Sciatic nerve (tissue), 2 donors: ENCODE measurements at regions of chr12 and their contacts with region 1.

Region 1: DNA sequence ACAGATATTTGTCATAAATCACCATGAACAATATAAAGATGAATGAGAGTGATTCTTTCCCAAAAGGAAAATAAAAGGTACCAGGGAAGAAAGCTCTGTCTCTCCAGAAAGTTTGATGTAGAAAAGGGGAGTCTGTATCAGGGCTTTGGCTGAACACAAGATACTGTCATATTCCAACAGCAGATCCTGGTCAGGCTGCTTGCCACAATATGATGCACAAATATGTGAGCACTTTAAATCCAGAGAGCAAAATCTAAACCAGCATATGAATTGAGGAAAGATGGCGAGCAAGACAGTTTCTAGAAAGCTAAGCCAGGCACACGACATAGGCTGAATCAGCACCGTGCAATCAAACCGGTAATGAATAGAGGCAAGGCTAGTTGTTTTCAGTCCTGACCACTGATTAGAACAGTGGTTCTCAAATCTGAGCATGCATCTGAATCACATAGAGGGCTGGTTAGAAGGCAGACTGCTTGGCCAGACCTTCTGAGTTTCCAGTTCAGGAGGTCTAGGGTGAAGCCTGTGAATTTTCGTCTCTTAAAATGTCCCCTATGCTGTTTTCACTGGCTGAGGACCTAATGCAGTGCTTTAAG is 60.7 kb downstream of the PLCZ1 start:
- DNase-seq: no peak
- ATAC-seq: no peak

Region 2: GRCh38 chr12:18391151-18391550 is 285.9 kb before region 1 on chr12:
- intact Hi-C with region 1: no loop called
- DNase-seq: no peak
- ATAC-seq: no peak

Region 3: DNA sequence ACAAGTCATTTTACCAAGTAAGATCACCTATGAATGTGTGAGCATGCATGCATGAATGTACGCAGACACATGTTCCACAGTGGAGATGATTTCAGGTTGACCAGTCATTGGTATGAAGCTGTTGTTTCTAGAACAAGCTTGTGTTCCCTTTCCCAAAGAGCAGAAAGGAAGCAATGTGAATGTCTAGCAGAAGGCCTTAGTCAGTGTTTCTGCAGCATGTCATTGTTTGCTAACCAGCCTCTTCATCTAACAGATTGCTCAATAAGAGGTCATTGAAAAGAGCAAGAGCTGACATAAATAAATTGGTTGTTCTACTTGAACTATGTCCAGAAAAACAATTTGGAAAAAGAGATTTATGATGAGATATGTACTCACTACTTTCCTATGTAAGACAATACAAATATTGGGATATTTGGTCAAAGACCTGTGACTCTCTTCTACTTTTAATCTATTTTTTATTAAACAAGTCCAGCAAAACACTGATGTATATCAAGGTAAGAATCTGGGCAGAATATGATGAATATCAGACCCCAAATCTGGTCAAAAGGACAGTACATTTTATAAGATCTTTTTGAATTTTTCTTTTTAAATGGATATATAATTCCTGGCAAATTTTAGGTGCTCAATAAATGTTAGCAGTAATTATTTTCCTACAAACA is 130.5 kb before region 1 on chr12:
- intact Hi-C with region 1: no loop called
- DNase-seq: no peak
- ATAC-seq: peak; percentile 65

Region 4: DNA sequence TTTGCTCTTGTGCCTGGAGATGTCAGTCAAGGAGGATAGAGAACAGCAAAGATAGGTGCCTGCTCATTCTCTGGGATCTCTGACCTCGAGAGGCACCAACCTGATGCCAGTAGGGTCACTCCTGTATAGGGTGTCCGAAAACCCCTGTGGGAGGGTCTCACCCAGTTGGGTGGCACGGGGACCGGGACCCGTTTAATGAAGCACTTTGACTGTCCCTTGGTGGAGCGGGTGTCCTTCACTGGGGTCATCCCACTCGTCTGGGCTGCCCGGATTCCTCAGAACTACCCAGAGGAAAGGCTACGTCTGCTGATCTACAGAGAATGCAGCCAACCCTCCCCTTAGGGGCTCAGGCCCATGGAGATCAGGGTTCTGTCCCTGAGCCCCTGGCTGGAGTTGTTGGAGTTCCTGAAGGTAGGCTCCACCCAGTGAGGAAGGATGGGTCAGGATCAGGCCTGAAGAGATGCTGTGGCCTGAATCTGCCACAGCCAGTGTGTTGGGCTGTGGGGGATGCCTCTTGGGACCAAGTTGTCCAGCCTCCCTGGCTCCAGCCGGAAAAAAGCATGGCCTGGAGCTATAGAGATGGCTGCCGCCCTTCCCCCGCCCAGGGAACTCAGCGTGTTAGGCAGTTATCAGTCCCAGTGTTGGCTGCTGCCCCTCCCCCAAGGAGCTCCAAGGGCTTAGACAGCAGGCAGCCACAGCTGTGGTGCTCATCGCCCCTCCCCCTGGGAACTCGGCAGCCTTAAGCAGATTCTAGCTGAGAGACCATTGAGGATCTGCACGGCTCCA is 218.6 kb after region 1 on chr12:
- intact Hi-C with region 1: loop called (anchors 5 kb)
- DNase-seq: no peak
- ATAC-seq: no peak